ENCODE measurements at regions of chr5 and their contacts with region 1.

Region 1: DNA sequence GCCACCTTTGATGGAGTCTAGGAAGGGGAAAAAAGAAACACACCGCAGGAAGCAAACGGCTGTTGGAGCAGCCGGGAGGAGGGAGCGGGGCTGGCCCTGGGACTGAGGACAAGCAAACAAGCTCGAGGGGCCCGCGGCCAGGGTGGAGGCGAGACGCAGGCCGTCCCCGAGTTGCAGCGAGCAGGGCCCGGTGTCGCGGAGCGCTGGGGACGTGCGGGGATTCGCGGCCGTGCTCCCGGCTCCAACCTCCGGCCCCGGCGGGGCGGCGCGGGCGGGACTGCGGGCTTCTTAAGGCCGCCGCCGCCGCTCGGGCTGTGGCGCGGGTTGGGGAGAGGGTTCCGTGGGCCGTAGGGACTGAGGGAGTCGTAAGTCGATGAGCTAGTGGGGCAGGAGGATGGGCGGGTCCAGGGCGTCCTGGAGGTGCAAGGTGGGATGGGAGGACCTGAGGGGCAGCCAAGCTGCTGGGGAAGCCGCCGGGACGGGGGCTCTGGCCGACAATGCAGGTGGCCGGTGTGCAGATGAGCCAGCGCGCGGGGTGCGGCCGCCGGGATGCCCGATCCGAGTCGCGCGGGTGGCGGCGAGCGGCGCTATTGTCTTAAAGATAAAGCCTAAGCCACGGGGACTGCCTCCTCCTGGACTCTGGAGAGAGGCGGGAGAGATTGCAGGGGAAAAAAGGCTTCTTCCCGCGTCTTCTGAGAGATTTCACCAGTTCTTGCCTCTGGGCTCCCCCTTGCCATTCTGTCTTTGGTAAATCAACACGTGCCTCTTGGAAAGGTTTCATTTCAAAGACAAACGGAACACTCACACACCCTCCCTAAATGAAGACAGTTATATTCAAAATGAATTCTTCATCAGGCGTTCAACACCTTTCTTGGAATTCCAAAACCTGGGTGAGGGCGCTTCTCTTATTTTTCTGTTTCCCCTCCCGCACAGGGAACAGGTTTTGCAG is 1.6 kb upstream of the HAPLN1 start:
- DNase-seq: no peak
- H3K4me3 ChIP-seq: peak overlapping the region; percentile 51
- H3K27me3 ChIP-seq: peaks cover 8% of the 10 kb centered on the region
- CTCF ChIP-seq: peak; percentile 36

Region 2: DNA sequence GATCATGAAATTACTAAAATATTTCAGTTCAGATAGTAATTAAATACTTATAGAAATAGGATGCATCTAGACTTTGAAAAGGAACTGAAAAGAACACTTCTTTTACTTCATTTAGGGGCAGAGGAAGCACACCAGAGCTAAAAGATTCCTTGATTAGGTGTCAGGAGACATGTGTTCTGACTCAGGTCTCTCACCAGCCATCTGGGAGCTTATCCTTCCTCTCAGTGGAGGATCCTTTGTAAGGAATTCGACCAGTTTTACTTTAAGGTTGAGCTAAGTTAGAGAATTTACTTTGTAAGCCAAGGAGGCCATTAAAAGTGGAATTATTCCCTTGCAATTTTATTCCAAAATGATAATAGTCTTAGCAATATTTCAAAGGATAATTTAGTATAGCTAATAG is 234.0 kb before region 1 on chr5:
- CTCF ChIA-PET with region 1: no interaction called
- POLR2A ChIA-PET with region 1: no interaction called
- DNase-seq: no peak
- H3K4me3 ChIP-seq: no peak overlapping the region
- H3K27me3 ChIP-seq: no peaks in the 10 kb centered on the region
- CTCF ChIP-seq: no peak

Region 3: DNA sequence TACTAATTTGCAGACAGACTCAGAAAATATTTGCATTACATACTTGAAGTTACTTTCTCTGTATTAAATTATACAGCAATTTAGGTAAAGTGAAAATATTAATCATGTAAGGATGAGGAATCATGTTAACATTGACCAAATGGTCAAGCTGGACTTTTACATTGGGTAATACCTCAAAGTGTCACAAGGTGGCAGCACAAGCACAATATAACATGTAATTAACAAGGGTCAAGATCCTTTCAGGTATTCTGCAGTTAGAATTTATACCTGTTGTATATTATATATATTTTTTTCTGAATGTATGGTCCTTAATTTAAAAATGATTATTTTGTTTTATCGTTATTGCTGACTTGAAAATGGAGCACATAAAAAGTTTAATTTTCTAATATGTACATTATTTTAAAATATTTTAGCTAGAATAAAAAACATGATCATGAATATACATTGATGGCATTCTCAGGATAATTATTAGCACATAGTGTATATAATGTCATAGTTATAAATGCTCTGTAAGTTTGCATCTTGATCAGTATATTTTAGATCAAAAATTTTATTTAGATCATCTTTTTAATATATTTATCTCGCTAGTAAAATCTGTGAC is 10.1 kb before region 1 on chr5:
- CTCF ChIA-PET with region 1: interaction called, 12 read pairs
- POLR2A ChIA-PET with region 1: no interaction called
- DNase-seq: no peak
- H3K4me3 ChIP-seq: no peak overlapping the region
- H3K27me3 ChIP-seq: no peaks in the 10 kb centered on the region
- CTCF ChIP-seq: peak; percentile 63